ENCODE measurements at regions of chr18 and their contacts with region 1.

Region 1: DNA sequence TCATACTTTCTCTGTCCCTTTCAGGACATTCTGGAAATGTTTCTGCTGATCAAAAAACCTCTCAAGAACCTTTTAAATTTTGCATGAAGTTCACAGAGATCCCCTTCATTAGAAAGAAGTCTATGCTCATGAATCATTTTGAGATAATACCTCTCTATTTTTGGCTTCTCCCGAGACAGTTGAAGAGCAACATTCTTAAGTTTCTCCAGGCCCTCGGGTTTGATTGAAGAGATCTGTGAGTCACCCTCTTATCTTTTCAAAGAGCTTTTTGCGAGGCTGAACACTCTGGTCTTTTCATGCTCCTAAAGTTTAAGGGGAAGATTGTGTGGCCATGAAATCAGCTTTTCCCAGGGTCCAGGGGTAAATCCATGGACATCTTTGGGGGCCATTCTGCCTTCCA is 354.2 kb downstream of the FBXO15 start:
- DNase-seq: no peak

Region 2: GRCh38 chr18:73551211-73551610 is 242.2 kb before region 1 on chr18:
- intact Hi-C with region 1: no loop called
- DNase-seq: no peak

Region 3: DNA sequence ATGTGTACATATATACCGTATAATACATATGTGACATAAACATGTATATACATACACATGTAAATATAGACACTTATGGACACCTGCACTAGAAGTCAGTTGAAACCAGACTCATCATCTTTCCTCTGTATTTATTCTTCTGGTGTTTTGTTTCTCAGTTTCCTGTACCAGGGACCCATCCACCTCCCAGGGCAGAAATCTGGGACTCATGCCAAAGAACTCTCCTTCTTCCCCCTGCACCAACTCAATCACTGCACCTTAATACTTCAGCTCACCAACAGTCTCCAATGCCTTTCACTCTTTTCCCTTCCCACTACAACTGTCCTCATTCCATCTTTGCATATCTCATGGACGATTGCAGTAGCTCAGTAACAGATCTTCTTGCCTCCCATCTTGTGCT is 73.8 kb before region 1 on chr18:
- intact Hi-C with region 1: loop called in 1 of 2 experiments (anchors 2 kb)
- DNase-seq: no peak

Region 4: GRCh38 chr18:73807551-73808192 is 14.3 kb after region 1 on chr18:
- intact Hi-C with region 1: no loop called
- DNase-seq: no peak

Region 5: DNA sequence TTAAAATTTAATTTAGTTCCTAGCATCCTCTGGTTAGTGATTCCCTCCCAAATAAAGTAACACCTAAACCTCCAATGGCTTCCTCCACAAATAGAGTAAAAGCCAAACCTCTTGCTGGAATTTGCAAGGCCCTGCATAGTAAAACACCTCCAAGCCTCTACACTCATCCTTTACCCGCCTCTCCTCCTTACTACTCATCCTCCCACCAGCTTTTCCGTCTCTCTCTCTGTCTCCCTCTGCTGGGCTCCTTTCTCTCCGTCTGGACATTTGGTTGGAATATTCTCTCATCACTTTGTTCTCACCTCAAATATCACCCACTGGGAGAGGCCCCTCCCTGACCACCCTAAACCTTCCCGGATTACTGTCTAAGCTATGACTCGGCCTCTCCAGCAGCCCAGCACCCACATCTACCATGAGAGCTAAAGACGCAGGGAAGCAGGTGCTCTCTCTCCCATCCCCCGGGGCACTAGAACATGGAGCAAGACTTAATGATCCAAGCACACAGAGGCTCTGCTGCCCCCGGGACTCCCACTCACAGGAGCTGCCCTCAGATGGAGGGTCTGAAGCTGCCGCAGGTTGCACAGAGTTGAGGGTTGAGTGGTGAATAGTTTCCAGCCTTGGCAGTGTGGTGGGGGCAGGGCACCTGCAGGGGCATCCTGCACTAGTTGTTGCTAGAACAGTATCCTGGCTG is 187.0 kb after region 1 on chr18:
- intact Hi-C with region 1: no loop called
- DNase-seq: no peak

Measured in posterior vena cava (tissue), 2 donors.